ENCODE measurements at regions of chr2 and their contacts with region 1.

Region 1: DNA sequence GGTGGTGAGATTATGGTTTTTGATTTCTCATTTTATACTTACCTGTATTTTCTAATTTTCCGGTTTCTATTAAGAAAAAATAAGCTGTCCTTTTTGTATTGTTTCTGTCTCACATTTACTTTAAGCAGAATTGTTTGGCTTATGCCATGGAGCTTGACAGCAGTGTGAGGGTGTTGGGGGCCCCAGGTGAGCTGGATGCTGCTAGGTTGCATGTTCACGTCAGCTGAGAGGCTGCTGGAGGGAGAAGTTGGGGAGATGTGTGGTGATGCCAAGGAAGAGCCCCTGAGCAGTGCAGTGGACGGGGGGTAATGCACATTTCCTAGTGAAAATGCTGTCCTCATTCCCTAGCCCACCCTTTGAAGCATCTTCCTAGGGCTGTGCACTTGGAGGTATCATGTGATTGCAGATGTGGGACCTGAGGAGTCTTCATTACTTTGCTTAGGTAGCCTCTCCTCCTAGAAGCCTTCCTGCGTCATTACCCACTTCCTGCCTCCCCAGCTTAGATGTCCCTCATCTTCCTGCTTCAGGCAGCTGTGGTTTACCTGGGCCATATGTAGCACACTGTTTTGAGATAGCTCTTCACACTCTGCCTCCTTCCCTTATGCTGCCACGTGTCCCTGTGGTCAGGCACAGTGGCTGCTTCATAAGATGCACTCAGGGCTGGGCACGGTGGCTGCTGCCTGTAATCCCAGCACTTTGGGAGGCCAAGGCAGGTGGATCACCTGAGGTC is 16.2 kb downstream of the ATG16L1 start:
- DNase-seq: no peak
- ATAC-seq: no peak
- H3K4me3 ChIP-seq: no peak overlapping the region
- H3K27ac ChIP-seq: no peak overlapping the region
- H3K4me1 ChIP-seq: no peaks in the 10 kb centered on the region
- H3K27me3 ChIP-seq: no peaks in the 10 kb centered on the region
- CTCF ChIP-seq: no peak
- EP300 ChIP-seq: no peak
- POLR2A ChIP-seq: no peak
- RAD21 ChIP-seq: no peak

Region 2: DNA sequence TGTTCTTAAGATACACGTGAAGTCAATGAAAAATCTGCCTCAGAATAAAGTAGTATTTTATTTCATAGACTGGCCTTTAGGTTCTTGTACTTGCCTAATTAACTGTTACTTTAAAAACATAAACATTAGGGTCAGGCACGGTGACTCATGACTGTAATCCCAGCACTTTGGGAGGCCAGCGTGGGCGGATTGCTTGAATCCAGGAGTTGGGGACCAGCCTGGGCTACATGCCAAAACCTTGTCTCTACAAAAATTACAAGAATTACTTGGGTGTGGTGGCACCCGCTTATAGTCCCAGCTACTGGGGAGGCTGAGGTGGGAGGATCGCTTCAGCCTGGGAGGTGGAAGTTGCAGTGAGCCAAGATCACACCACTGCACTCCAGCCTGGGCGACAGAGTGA is 413.6 kb before region 1 on chr2:
- CTCF ChIA-PET with region 1: no interaction called
- POLR2A ChIA-PET with region 1: no interaction called
- in situ Hi-C with region 1: loop called (anchors 10 kb)
- intact Hi-C with region 1: no loop called
- DNase-seq: peak; percentile 16 to 89 (median 16)
- ATAC-seq: peak; percentile 84
- H3K4me3 ChIP-seq: no peak overlapping the region
- H3K27ac ChIP-seq: no peak overlapping the region
- H3K4me1 ChIP-seq: peaks cover 7 to 11% of the 10 kb centered on the region in 2 experiments
- H3K27me3 ChIP-seq: no peaks in the 10 kb centered on the region
- CTCF ChIP-seq: no peak
- EP300 ChIP-seq: no peak
- POLR2A ChIP-seq: no peak
- RAD21 ChIP-seq: no peak

Region 3: GRCh38 chr2:233185963-233186362 is 81.7 kb before region 1 on chr2:
- CTCF ChIA-PET with region 1: no interaction called
- POLR2A ChIA-PET with region 1: no interaction called
- in situ Hi-C with region 1: no loop called
- intact Hi-C with region 1: no loop called
- DNase-seq: no peak
- ATAC-seq: no peak
- H3K4me3 ChIP-seq: no peak overlapping the region
- H3K27ac ChIP-seq: no peak overlapping the region
- H3K4me1 ChIP-seq: peaks cover 0 to 6% of the 10 kb centered on the region in 2 experiments; a peak in 2 of 5 replicates
- H3K27me3 ChIP-seq: no peaks in the 10 kb centered on the region
- CTCF ChIP-seq: no peak
- EP300 ChIP-seq: no peak
- POLR2A ChIP-seq: no peak
- RAD21 ChIP-seq: no peak

Region 4: DNA sequence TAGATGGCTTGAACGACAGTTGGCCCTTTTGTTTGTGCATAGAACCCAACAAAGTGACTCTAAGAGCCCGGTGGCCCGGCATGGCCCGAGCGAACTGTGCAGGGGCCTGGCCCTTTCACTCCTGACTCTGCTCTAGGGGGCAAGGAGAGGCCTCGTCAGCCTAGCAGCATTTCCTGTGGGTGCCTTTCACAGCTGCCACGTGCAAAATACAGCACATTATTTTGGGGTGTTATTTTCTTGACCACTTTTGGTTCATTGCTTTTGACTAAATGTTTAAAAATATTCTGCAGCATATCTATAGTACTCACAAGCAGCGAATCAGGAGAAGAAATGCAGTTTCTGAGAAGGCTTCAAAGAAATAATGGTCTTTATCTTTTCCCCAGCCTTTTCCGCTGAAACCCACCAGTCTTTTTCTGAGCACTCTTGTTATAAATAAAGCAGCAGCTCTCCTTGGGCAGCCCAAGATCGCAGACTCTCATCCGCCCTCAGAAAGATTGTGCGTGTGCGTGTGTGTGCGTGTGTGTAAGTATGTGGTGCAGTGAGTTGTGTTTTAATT is 117.9 kb after region 1 on chr2:
- CTCF ChIA-PET with region 1: no interaction called
- POLR2A ChIA-PET with region 1: no interaction called
- in situ Hi-C with region 1: no loop called
- intact Hi-C with region 1: loop called (anchors 5 kb)
- DNase-seq: peak in 1 of 4 experiments; percentile 33
- ATAC-seq: no peak; the same call in 2 of the 3 replicates
- H3K4me3 ChIP-seq: no peak overlapping the region
- H3K27ac ChIP-seq: no peak overlapping the region
- H3K4me1 ChIP-seq: peaks cover 0 to 10% of the 10 kb centered on the region in 2 experiments; a peak in 4 of 5 replicates
- H3K27me3 ChIP-seq: no peaks in the 10 kb centered on the region
- CTCF ChIP-seq: no peak
- EP300 ChIP-seq: no peak
- POLR2A ChIP-seq: no peak
- RAD21 ChIP-seq: no peak

Region 5: DNA sequence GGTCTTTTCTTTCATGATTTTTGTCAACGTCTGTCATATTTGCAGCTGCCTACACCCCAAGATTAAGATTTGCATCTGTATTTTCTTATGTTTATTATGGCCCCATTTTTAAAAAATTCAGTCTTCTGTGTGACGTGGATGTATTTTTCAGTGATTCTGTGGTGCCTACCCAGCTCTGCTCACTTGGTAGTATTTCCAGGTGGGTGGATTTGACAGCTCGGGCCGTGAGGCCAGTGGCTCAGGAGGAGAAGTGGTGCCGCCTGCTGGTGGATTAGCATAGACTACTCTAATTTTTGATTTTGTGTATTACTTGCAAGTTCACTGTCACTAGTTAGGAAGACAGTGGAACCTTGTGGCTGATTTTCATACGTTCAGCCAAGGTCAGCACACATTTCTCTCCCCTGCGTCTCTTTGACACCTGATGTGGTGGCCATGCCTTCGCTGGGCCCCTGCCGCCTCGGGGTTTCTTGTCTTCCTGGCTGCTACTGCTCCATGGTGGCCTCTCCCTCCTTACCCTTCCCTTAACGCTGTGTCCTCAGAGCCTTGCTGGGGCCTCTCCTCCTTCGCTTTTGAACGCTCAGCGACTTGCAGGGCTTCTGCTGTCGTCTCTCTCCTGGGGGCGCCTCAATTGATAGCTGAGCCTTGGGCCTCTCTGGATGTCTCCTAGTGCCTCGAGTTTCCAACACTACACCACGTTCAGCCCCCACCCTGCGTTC is 175.9 kb after region 1 on chr2:
- CTCF ChIA-PET with region 1: no interaction called
- POLR2A ChIA-PET with region 1: no interaction called
- in situ Hi-C with region 1: no loop called
- intact Hi-C with region 1: loop called (anchors 10 kb)
- DNase-seq: peak; percentile 74 to 76 (median 75)
- ATAC-seq: peak; percentile 92
- H3K4me3 ChIP-seq: no peak overlapping the region
- H3K27ac ChIP-seq: no peak overlapping the region
- H3K4me1 ChIP-seq: no peaks in the 10 kb centered on the region; a peak in 2 of 5 replicates
- H3K27me3 ChIP-seq: no peaks in the 10 kb centered on the region
- CTCF ChIP-seq: peak; percentile 80 to 88 (median 81)
- EP300 ChIP-seq: no peak
- POLR2A ChIP-seq: no peak
- RAD21 ChIP-seq: peak; percentile 76 to 88